ENCODE measurements at regions of chr2 and their contacts with region 1.

Region 1: DNA sequence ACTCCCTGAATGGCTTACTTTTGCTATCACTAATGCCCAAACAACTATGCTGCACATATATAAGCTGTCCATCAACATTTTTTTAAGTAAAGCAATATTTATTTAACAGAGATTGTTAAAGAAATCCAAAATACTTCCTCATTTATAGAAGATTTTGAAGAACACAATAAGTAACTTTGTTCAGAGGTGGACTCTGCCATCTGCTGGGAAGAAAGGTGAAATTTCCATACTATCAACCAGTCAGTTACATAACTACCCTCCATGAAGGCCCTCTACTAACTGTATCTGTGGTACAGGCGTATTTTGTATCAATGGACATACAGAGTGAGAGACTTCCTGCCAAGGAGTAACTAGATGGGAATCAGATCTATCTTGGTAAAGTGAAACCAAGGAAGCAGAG is 106.0 kb downstream of the DTNB start:
- DNase-seq: peak; percentile 75
- H3K4me3 ChIP-seq: no peak overlapping the region
- H3K27ac ChIP-seq: peak overlapping the region; percentile 65
- H3K4me1 ChIP-seq: peaks cover 52% of the 10 kb centered on the region
- CTCF ChIP-seq: peak; percentile 91

Region 2: GRCh38 chr2:25215948-25216679 is 351.3 kb before region 1 on chr2:
- CTCF ChIA-PET with region 1: no interaction called
- POLR2A ChIA-PET with region 1: interaction called, 3 read pairs
- intact Hi-C with region 1: loop called (anchors 2 kb)
- DNase-seq: peak; percentile 41
- H3K4me3 ChIP-seq: peak overlapping the region; percentile 44
- H3K27ac ChIP-seq: no peak overlapping the region
- H3K4me1 ChIP-seq: peaks cover under 1% of the 10 kb centered on the region
- CTCF ChIP-seq: no peak

Region 3: DNA sequence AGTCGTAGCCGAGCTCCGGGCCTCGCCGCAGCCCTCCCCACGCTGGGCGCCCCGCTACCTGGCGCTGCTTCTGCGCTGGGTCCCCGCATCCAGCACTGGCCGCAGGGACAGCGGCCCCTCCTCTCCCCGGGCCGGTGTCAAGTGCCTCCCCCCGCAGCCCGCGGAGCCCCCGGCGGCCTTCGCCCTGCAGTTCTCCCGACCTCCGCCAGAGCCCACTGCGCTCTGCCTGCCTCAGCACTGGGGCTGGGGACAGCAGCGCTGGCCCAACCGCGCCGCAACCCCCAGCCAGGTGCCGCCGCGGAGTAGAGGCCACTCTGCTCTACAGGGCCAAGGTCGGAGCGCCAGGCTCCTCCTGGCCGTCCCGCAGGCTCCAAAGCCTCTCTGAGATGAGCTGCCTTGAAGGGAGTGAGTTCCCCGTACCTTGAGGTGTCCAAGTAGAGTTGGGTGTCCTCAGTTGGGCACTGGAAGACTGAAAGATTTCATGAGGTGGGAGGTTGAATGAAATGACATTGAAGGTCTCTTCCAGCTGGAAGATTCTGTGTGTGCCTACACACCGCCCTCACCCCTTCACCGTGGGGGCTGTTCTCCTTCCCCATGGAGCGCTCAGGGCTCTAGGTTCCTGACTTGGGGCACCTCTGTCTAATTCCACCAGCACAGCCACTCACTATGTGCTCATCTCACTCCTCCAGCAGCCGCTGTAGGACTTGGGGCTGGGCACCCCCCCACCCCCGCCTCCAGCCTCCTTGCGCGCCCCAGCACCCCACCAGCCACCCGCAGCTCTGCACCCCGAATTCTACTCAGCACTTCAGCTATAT is 224.8 kb before region 1 on chr2:
- CTCF ChIA-PET with region 1: no interaction called
- POLR2A ChIA-PET with region 1: no interaction called
- intact Hi-C with region 1: loop called (anchors 2 kb)
- DNase-seq: peak; percentile 84
- H3K4me3 ChIP-seq: peak overlapping the region; percentile 75
- H3K27ac ChIP-seq: no peak overlapping the region
- H3K4me1 ChIP-seq: peaks cover 11% of the 10 kb centered on the region
- CTCF ChIP-seq: peak; percentile 84

Region 4: GRCh38 chr2:25376750-25377621 is 190.4 kb before region 1 on chr2:
- CTCF ChIA-PET with region 1: interaction called, 3 read pairs
- POLR2A ChIA-PET with region 1: interaction called, 3 read pairs
- intact Hi-C with region 1: loop called (anchors 10 kb)
- DNase-seq: peak; percentile 98
- H3K4me3 ChIP-seq: peak overlapping the region; percentile 31
- H3K27ac ChIP-seq: peak overlapping the region; percentile 82
- H3K4me1 ChIP-seq: peaks cover 61% of the 10 kb centered on the region
- CTCF ChIP-seq: peak; percentile 97

Region 5: GRCh38 chr2:25420820-25421237 is 146.6 kb before region 1 on chr2:
- CTCF ChIA-PET with region 1: no interaction called
- POLR2A ChIA-PET with region 1: interaction called, 7 read pairs
- intact Hi-C with region 1: loop called (anchors 2 kb)
- DNase-seq: peak; percentile 71
- H3K4me3 ChIP-seq: peak overlapping the region; percentile 65
- H3K27ac ChIP-seq: peak overlapping the region; percentile 99
- H3K4me1 ChIP-seq: peaks cover 83% of the 10 kb centered on the region
- CTCF ChIP-seq: no peak